Endothelial cell of umbilical vein (primary cell): ENCODE measurements at regions of chr2 and their contacts with region 1.

Region 1: GRCh38 chr2:150425121-150425955 is 62.1 kb downstream of the RND3 start:
- DNase-seq: peak; percentile 76
- H3K4me3 ChIP-seq: peak overlapping the region in 2 of 3 experiments; percentile 30 to 55
- H3K27ac ChIP-seq: peak overlapping the region; percentile 77
- H3K4me1 ChIP-seq: peaks cover 17% of the 10 kb centered on the region
- H3K27me3 ChIP-seq: no peaks in the 10 kb centered on the region
- CTCF ChIP-seq: peak; percentile 47 to 49
- POLR2A ChIP-seq: peak; percentile 33

Region 2: GRCh38 chr2:149782572-149782971 is 642.8 kb before region 1 on chr2:
- CTCF ChIA-PET with region 1: no interaction called
- POLR2A ChIA-PET with region 1: no interaction called
- dilution Hi-C with region 1: no loop called
- intact Hi-C with region 1: no loop called
- DNase-seq: no peak
- H3K4me3 ChIP-seq: no peak overlapping the region
- H3K27ac ChIP-seq: no peak overlapping the region
- H3K4me1 ChIP-seq: no peaks in the 10 kb centered on the region
- H3K27me3 ChIP-seq: no peaks in the 10 kb centered on the region
- CTCF ChIP-seq: no peak
- POLR2A ChIP-seq: no peak

Region 3: DNA sequence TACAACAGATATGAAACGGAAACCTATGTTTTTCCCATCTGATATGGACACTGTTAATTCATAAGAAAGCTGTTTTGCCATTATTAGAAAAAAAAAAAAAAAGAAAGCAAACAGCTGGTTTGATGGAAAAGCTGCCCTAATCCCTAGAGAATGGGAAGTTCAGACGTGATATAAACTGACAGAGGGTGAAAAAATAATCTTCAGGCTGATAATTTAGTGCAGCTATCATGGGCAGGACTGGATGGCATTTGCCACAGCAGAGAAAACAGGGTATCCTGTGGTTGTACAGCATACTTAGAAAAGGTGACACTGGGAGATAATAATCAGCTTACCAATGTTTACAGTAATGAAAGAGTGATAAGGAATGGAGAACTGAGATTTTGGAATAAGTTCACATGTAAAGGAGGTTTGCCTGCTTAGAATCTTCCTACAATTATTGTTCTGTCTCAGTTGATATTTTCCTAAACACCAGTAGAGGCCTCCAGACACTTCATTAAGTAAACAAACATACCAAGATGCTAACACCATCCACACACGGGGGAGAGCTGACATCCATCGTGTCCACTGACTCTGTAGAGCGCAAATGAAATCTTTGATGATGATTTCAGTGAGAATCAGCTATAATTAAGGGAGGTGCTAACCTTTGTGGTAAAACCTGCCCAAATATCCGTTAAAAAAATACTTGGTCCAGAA is 626.2 kb before region 1 on chr2:
- CTCF ChIA-PET with region 1: interaction called, 15 read pairs
- POLR2A ChIA-PET with region 1: no interaction called
- dilution Hi-C with region 1: no loop called
- intact Hi-C with region 1: loop called (anchors 10 kb)
- DNase-seq: peak; percentile 52
- H3K4me3 ChIP-seq: no peak overlapping the region
- H3K27ac ChIP-seq: no peak overlapping the region
- H3K4me1 ChIP-seq: peaks cover 6% of the 10 kb centered on the region
- H3K27me3 ChIP-seq: no peaks in the 10 kb centered on the region
- CTCF ChIP-seq: peak; percentile 15 to 34
- POLR2A ChIP-seq: no peak

Region 4: DNA sequence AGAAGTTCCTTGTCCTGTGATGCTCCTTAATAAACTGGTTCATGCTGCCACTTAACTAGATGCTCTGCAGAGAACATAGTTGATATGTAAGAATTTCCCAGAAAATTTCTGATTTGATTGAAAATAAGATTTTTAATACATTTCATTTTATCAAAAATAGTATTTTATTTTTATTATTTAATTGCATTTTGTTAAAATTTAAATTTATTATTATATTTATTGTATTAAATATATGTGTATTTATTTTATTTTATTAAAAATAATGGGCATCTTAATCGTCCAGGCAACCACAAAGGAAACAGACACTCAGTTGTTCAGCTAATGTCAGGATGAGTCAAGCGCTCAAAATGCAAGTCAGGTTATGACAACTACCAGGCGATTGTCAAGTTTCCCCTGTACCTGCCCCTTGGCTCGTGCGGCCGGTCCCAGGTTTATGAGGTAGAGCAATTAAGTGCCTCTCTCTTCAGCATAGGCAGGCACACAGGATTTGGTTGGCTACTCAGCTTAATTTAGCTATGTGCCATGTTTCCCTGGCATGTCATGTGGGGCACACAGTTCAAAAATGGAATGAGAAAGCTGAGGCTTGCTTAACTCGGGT is 299.1 kb before region 1 on chr2:
- CTCF ChIA-PET with region 1: no interaction called
- POLR2A ChIA-PET with region 1: no interaction called
- dilution Hi-C with region 1: no loop called
- intact Hi-C with region 1: no loop called
- DNase-seq: no peak
- H3K4me3 ChIP-seq: no peak overlapping the region
- H3K27ac ChIP-seq: peak overlapping the region; percentile 65
- H3K4me1 ChIP-seq: peaks cover 25% of the 10 kb centered on the region
- H3K27me3 ChIP-seq: no peaks in the 10 kb centered on the region
- CTCF ChIP-seq: no peak
- POLR2A ChIP-seq: no peak

Region 5: GRCh38 chr2:150309311-150310032 is 115.9 kb before region 1 on chr2:
- CTCF ChIA-PET with region 1: no interaction called
- POLR2A ChIA-PET with region 1: no interaction called
- dilution Hi-C with region 1: no loop called
- intact Hi-C with region 1: no loop called
- DNase-seq: no peak
- H3K4me3 ChIP-seq: no peak overlapping the region
- H3K27ac ChIP-seq: no peak overlapping the region
- H3K4me1 ChIP-seq: no peaks in the 10 kb centered on the region
- H3K27me3 ChIP-seq: no peaks in the 10 kb centered on the region
- CTCF ChIP-seq: no peak
- POLR2A ChIP-seq: no peak

Region 6: GRCh38 chr2:150410809-150411208 is 14.5 kb before region 1 on chr2:
- CTCF ChIA-PET with region 1: interaction called, 11 read pairs
- POLR2A ChIA-PET with region 1: interaction called, 4 read pairs
- dilution Hi-C with region 1: no loop called
- intact Hi-C with region 1: no loop called
- DNase-seq: peak; percentile 85
- H3K4me3 ChIP-seq: no peak overlapping the region
- H3K27ac ChIP-seq: peak overlapping the region; percentile 95
- H3K4me1 ChIP-seq: peaks cover 40% of the 10 kb centered on the region
- H3K27me3 ChIP-seq: no peaks in the 10 kb centered on the region
- CTCF ChIP-seq: no peak
- POLR2A ChIP-seq: peak; percentile 39

Region 7: DNA sequence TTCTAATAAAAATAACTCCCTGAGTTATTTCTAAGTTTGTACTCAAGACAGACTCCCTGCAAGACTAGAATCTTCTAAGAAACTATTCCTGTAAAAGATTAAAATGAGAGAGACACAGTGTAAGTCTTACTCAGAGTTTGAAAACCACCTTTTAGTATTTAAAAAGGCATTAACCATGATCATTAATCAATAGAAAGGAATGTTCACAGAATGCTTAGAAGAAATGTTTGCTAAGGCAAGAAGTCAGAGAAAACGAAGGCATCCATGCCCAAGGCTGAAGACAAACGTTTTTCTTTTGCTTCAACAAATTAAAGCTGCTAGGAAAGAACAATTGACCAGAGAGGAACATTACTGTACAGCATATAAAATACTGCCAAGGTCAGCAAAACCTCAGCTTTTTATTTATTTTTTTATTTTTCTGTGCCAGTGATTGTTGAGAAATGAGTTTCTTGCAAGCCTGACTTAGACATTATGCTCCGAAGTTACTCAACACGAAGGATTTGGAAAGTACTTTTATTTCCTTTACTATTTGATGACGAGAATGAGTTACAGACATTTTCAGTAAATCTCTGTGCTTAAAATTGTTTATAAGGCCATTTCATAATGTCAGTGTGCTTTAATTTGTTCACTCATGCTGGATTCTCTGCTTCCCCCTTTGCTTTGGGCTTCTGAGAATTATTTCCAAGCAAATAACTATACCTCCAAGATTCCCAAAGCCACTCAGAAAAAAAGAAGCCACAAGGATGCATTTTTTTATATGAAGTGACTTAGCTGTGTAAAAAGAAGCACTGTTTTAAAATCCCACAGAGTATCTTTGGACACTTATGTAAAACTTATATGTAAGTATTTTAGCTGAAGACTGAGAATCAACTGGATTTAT is 41.6 kb after region 1 on chr2:
- CTCF ChIA-PET with region 1: interaction called, 17 read pairs
- POLR2A ChIA-PET with region 1: no interaction called
- dilution Hi-C with region 1: no loop called
- intact Hi-C with region 1: loop called (anchors 1 kb)
- DNase-seq: peak; percentile 59
- H3K4me3 ChIP-seq: no peak overlapping the region
- H3K27ac ChIP-seq: peak overlapping the region; percentile 96
- H3K4me1 ChIP-seq: peaks cover 90% of the 10 kb centered on the region
- H3K27me3 ChIP-seq: no peaks in the 10 kb centered on the region
- CTCF ChIP-seq: no peak
- POLR2A ChIP-seq: peak; percentile 60

Region 8: GRCh38 chr2:150478200-150478974 is 53.0 kb after region 1 on chr2:
- CTCF ChIA-PET with region 1: interaction called, 13 read pairs
- POLR2A ChIA-PET with region 1: interaction called, 5 read pairs
- dilution Hi-C with region 1: no loop called
- intact Hi-C with region 1: no loop called
- DNase-seq: peak; percentile 37
- H3K4me3 ChIP-seq: peak overlapping the region in 2 of 3 experiments; percentile 6 to 46
- H3K27ac ChIP-seq: peak overlapping the region; percentile 83
- H3K4me1 ChIP-seq: peaks cover 97% of the 10 kb centered on the region
- H3K27me3 ChIP-seq: no peaks in the 10 kb centered on the region
- CTCF ChIP-seq: no peak
- POLR2A ChIP-seq: peak; percentile 68

Region 9: GRCh38 chr2:150610671-150611279 is 185.4 kb after region 1 on chr2:
- CTCF ChIA-PET with region 1: no interaction called
- POLR2A ChIA-PET with region 1: no interaction called
- dilution Hi-C with region 1: no loop called
- intact Hi-C with region 1: loop called (anchors 1 kb)
- DNase-seq: peak; percentile 45
- H3K4me3 ChIP-seq: no peak overlapping the region
- H3K27ac ChIP-seq: no peak overlapping the region
- H3K4me1 ChIP-seq: peaks cover 8% of the 10 kb centered on the region
- H3K27me3 ChIP-seq: no peaks in the 10 kb centered on the region
- CTCF ChIP-seq: peak; percentile 31 to 34
- POLR2A ChIP-seq: no peak

Region 10: GRCh38 chr2:150802635-150803034 is 377.3 kb after region 1 on chr2:
- CTCF ChIA-PET with region 1: no interaction called
- POLR2A ChIA-PET with region 1: no interaction called
- dilution Hi-C with region 1: no loop called
- intact Hi-C with region 1: no loop called
- DNase-seq: no peak
- H3K4me3 ChIP-seq: no peak overlapping the region
- H3K27ac ChIP-seq: no peak overlapping the region
- H3K4me1 ChIP-seq: no peaks in the 10 kb centered on the region
- H3K27me3 ChIP-seq: no peaks in the 10 kb centered on the region
- CTCF ChIP-seq: no peak
- POLR2A ChIP-seq: no peak

Region 11: DNA sequence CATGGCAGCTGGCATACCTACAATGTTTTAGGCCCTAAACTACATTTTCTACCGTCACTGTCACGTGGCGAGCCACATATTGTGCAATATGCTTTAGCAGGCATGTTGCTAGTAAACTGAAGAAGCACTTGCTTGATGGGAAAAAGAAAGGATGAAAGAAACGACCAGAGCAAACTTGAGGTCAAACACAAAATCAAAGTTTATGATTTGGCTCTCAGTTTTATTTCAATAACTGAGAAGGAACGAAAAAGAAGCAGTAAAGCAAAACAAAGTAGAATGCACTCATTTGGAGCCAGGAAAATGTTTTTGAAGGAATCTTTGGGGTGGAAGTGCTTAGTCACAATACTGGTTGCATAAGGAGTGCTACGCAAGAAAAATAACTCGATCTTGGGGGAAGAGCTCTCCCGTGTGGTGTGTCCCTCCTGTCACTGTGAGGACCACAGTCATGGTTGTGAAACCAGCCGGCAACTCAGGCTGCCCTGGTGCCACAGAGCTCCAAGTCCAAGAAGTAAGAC is 486.5 kb after region 1 on chr2:
- CTCF ChIA-PET with region 1: interaction called, 3 read pairs
- POLR2A ChIA-PET with region 1: no interaction called
- dilution Hi-C with region 1: no loop called
- intact Hi-C with region 1: loop called (anchors 5 kb)
- DNase-seq: peak; percentile 77
- H3K4me3 ChIP-seq: no peak overlapping the region
- H3K27ac ChIP-seq: no peak overlapping the region
- H3K4me1 ChIP-seq: peaks cover 3% of the 10 kb centered on the region
- H3K27me3 ChIP-seq: peaks cover 0 to 2% of the 10 kb centered on the region in 2 experiments
- CTCF ChIP-seq: peak in 1 of 2 donors; percentile 27
- POLR2A ChIP-seq: no peak